GM12878 (cell line): ENCODE measurements at regions of chr7 and their contacts with region 1.

Region 1: GRCh38 chr7:148503875-148504487 is 86.6 kb upstream of the C7orf33 start:
- DNase-seq: no peak
- ATAC-seq: no peak
- H3K4me3 ChIP-seq: no peak overlapping the region
- H3K27ac ChIP-seq: no peak overlapping the region
- H3K4me1 ChIP-seq: peaks cover 53% of the 10 kb centered on the region
- H3K27me3 ChIP-seq: no peaks in the 10 kb centered on the region
- CTCF ChIP-seq: peak; percentile 53 to 75 (median 66); a peak in 5 of 6 replicates
- EP300 ChIP-seq: no peak
- POLR2A ChIP-seq: no peak
- RAD21 ChIP-seq: peak; percentile 88

Region 2: GRCh38 chr7:148527707-148528168 is 23.8 kb after region 1 on chr7:
- CTCF ChIA-PET with region 1: interaction called, 115 read pairs
- POLR2A ChIA-PET with region 1: no interaction called
- RAD21 ChIA-PET with region 1: interaction called, 12 read pairs
- SMC1A ChIA-PET with region 1: interaction called, 7 read pairs
- in situ Hi-C with region 1: no loop called
- intact Hi-C with region 1: loop called (anchors 1 kb)
- DNase-seq: peak; percentile 47
- ATAC-seq: peak; percentile 100
- H3K4me3 ChIP-seq: no peak overlapping the region
- H3K27ac ChIP-seq: no peak overlapping the region
- H3K4me1 ChIP-seq: no peaks in the 10 kb centered on the region
- H3K27me3 ChIP-seq: no peaks in the 10 kb centered on the region; a peak in 2 of 4 replicates
- CTCF ChIP-seq: peak; percentile 82 to 95 (median 87)
- EP300 ChIP-seq: no peak
- POLR2A ChIP-seq: no peak
- RAD21 ChIP-seq: peak; percentile 74

Region 3: DNA sequence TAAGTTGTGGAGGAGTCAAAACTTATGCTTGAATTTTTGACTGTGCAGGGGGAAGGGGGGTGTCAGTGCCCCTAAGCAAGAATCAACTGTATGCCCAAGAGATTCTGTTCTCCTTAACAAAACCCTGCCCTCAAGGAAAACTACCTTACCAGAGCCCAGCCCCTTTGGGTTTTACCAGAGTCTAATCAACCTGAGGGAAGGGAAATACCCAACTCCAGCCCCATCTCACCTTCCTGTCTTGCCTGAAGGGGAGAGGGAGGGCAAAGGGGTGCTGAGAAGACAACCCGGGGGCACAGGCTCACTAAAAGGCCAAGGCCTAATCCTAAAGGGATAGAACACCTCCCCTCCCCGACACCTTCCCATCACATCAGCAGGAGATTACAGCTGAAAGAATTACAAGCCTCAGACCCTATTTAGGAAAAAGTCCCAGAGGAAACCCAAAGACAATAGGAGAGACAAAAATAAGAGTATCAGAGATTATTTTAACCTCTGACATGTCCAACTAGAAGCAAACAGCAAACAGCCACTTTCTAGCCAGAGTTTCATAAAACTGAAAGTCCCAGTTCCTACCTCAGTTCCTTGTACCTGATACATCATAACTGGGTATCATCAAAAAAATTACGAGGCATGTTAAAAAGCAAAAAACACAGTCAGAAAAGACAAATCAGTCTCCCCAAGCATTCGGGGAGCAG is 59.7 kb after region 1 on chr7:
- CTCF ChIA-PET with region 1: interaction called, 12 read pairs
- POLR2A ChIA-PET with region 1: no interaction called
- RAD21 ChIA-PET with region 1: interaction called, 5 read pairs
- SMC1A ChIA-PET with region 1: interaction called, 4 read pairs
- in situ Hi-C with region 1: no loop called
- intact Hi-C with region 1: loop called (anchors 5 kb)
- DNase-seq: no peak
- ATAC-seq: peak; percentile 79
- H3K4me3 ChIP-seq: peak overlapping the region; percentile 20; the same call in 1 of the 2 replicates
- H3K27ac ChIP-seq: 0 out of 2 replicates have a peak overlapping the region, but pooled peaks have one; percentile 10
- H3K4me1 ChIP-seq: peaks cover 18% of the 10 kb centered on the region; the same call in 1 of the 2 replicates
- H3K27me3 ChIP-seq: peaks cover 0 to 3% of the 10 kb centered on the region in 2 experiments; a peak in 1 of 4 replicates
- CTCF ChIP-seq: no peak
- EP300 ChIP-seq: no peak
- POLR2A ChIP-seq: no peak
- RAD21 ChIP-seq: no peak

Region 4: GRCh38 chr7:148570510-148570909 is 66.5 kb after region 1 on chr7:
- CTCF ChIA-PET with region 1: interaction called, 14 read pairs
- POLR2A ChIA-PET with region 1: interaction called, 13 read pairs
- RAD21 ChIA-PET with region 1: interaction called, 5 read pairs
- SMC1A ChIA-PET with region 1: interaction called, 9 read pairs
- in situ Hi-C with region 1: no loop called
- intact Hi-C with region 1: no loop called
- DNase-seq: no peak
- ATAC-seq: no peak
- H3K4me3 ChIP-seq: no peak overlapping the region
- H3K27ac ChIP-seq: no peak overlapping the region
- H3K4me1 ChIP-seq: no peaks in the 10 kb centered on the region
- H3K27me3 ChIP-seq: 0 out of 4 replicates have a peak, but pooled peaks cover 0 to 3% of the 10 kb centered on the region in 2 experiments
- CTCF ChIP-seq: no peak
- EP300 ChIP-seq: no peak
- POLR2A ChIP-seq: no peak
- RAD21 ChIP-seq: no peak

Region 5: GRCh38 chr7:148575640-148576411 is 71.8 kb after region 1 on chr7:
- CTCF ChIA-PET with region 1: interaction called, 14 read pairs
- POLR2A ChIA-PET with region 1: no interaction called
- RAD21 ChIA-PET with region 1: no interaction called
- SMC1A ChIA-PET with region 1: interaction called, 9 read pairs
- in situ Hi-C with region 1: no loop called
- intact Hi-C with region 1: loop called (anchors 5 kb)
- DNase-seq: no peak
- ATAC-seq: peak; percentile 98
- H3K4me3 ChIP-seq: no peak overlapping the region
- H3K27ac ChIP-seq: no peak overlapping the region
- H3K4me1 ChIP-seq: no peaks in the 10 kb centered on the region
- H3K27me3 ChIP-seq: no peaks in the 10 kb centered on the region; a peak in 1 of 4 replicates
- CTCF ChIP-seq: peak; percentile 83 to 86 (median 86)
- EP300 ChIP-seq: no peak
- POLR2A ChIP-seq: no peak
- RAD21 ChIP-seq: peak; percentile 85

Region 6: GRCh38 chr7:148584154-148584827 is 80.3 kb after region 1 on chr7:
- CTCF ChIA-PET with region 1: no interaction called
- POLR2A ChIA-PET with region 1: no interaction called
- RAD21 ChIA-PET with region 1: no interaction called
- SMC1A ChIA-PET with region 1: no interaction called
- in situ Hi-C with region 1: no loop called
- intact Hi-C with region 1: loop called (anchors 5 kb)
- DNase-seq: no peak
- ATAC-seq: peak; percentile 97
- H3K4me3 ChIP-seq: no peak overlapping the region
- H3K27ac ChIP-seq: no peak overlapping the region
- H3K4me1 ChIP-seq: peaks cover 9% of the 10 kb centered on the region
- H3K27me3 ChIP-seq: no peaks in the 10 kb centered on the region; a peak in 1 of 4 replicates
- CTCF ChIP-seq: no peak
- EP300 ChIP-seq: 0 out of 4 replicates have a peak, but pooled peaks of 1 of the 2 experiments have one; percentile 9
- POLR2A ChIP-seq: no peak
- RAD21 ChIP-seq: no peak

Region 7: GRCh38 chr7:148664324-148664723 is 160.3 kb after region 1 on chr7:
- CTCF ChIA-PET with region 1: no interaction called
- POLR2A ChIA-PET with region 1: no interaction called
- RAD21 ChIA-PET with region 1: no interaction called
- SMC1A ChIA-PET with region 1: no interaction called
- in situ Hi-C with region 1: no loop called
- intact Hi-C with region 1: no loop called
- DNase-seq: no peak
- ATAC-seq: no peak
- H3K4me3 ChIP-seq: no peak overlapping the region
- H3K27ac ChIP-seq: no peak overlapping the region
- H3K4me1 ChIP-seq: no peaks in the 10 kb centered on the region
- H3K27me3 ChIP-seq: no peaks in the 10 kb centered on the region
- CTCF ChIP-seq: no peak
- EP300 ChIP-seq: no peak
- POLR2A ChIP-seq: no peak
- RAD21 ChIP-seq: no peak

Region 8: DNA sequence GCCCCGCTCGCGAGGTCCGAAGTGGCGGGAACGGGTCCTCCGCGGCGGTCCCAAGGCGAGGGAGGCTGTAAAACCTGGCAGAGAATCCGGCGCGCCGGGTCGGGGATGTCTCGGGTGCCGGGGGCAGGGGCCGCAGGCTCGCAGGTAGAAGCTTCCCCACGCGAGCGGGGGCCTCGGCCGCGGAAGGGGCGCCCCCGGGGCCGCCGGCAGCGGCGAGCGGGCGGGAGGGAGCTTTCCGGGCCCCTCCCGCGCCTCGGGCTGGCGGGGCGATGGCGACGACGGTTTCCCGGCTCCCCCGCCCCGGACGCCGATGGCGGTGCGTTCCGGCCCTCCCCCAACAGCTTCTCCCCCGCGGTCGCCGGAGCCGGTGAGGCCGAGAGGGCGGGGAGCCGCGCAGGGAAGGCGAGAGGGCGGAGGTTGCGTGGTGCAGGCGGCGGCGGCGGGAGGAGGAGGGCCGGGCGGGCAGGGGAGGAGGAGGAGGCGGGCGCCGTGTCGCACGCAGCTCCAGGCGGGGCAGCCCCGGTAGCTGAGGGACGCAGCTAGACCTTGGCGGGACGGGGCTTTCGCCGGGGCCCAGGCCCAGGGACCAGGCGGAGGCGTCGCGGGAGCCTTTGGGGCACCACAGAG is 194.5 kb after region 1 on chr7 and contains the start of gene CUL1:
- CTCF ChIA-PET with region 1: interaction called, 4 read pairs
- POLR2A ChIA-PET with region 1: no interaction called
- RAD21 ChIA-PET with region 1: interaction called, 4 read pairs
- SMC1A ChIA-PET with region 1: no interaction called
- in situ Hi-C with region 1: no loop called
- intact Hi-C with region 1: loop called (anchors 2 kb)
- DNase-seq: no peak
- ATAC-seq: peak; percentile 82
- H3K4me3 ChIP-seq: peak within 1 kb of the TSS; percentile 94
- H3K27ac ChIP-seq: peak within 1 kb of the TSS; percentile 79
- H3K4me1 ChIP-seq: peaks cover 9% of the 10 kb centered on the region
- H3K27me3 ChIP-seq: no peaks in the 10 kb centered on the region
- CTCF ChIP-seq: no peak
- EP300 ChIP-seq: no peak
- POLR2A ChIP-seq: peak; percentile 83
- RAD21 ChIP-seq: no peak
- polyA plus RNA-seq, gene CUL1: 13.3 to 21.4 TPM